Activated T-helper 1 cell treated with anti-CD3 and anti-CD28 coated beads, Interleukin-12 subunit alpha, Interleukin-12 subunit beta, Interleukin-2, Interleukin-4 antibody, amounts not matched to agents 30 ng/mL and 10 ng/mL and 1 ng/mL, durations not matched to agents 14 hours and 24 hours and 36 hours (primary cell): ENCODE measurements at regions of chrX and their contacts with region 1.

Region 1: GRCh38 chrX:119067023-119067739 is 5.6 kb upstream of the CT47C1 start:
- DNase-seq: no peak
- H3K4me3 Mint-ChIP-seq: no peak overlapping the region
- H3K27ac Mint-ChIP-seq: no peak overlapping the region
- H3K4me1 Mint-ChIP-seq: no peaks in the 10 kb centered on the region
- H3K27me3 Mint-ChIP-seq: no peaks in the 10 kb centered on the region

Region 2: DNA sequence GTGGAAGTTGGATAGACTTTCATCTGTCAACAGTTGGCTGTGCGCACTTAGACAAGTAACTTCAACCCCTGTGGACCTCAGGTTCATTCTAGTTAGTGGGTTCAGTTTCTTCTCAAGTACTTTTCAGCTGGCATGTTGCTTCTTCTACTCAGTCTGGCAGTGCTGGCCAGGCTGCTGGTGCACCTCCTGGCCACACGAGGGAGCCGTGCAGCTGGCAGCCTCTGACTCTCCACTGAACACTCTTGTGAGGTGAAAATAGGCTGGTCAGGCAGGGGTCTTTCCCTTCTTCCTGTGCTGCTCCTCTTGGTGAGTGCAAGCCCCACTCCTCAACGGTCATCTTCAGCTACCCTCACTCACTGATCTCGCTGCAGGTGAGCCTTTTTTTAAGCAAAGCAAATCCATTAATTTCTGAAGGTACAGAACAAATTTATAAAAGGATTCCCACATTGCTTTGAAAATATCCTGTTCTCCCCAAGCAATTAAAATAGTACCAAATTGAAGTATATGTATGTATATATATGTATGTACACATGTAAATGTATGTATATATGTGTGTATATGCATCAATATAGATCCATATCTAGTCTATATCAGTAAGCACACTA is 62.2 kb before region 1 on chrX:
- intact Hi-C with region 1: loop called (anchors 1 kb)
- DNase-seq: peak; percentile 6
- H3K4me3 Mint-ChIP-seq: no peak overlapping the region
- H3K27ac Mint-ChIP-seq: no peak overlapping the region
- H3K4me1 Mint-ChIP-seq: no peaks in the 10 kb centered on the region
- H3K27me3 Mint-ChIP-seq: peaks cover 2% of the 10 kb centered on the region